Breast epithelium (tissue), 4 donors: ENCODE measurements at regions of chr1 and their contacts with region 1.

Region 1: DNA sequence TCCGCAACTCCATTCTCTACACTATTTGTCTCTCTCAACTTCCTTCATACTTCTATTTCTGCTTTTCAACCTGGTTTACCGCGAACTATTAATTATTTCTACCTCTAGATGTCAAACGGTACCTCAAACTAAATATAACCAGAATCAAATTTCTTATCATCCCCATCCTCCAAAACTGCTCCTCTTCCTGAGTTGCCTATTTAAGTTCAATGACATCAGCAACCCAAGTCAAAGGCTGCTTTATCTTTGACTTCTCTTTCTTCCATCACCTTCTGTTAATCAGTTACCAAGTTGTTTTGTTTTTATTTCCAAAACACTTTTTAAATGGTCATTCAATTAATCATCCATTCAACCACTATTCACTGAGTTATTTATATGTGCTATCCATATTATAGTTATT is 171.9 kb downstream of the COL24A1 start:
- DNase-seq: no peak
- H3K4me3 ChIP-seq: no peak overlapping the region
- H3K27ac ChIP-seq: no peak overlapping the region
- H3K4me1 ChIP-seq: no peaks in the 10 kb centered on the region
- H3K27me3 ChIP-seq: no peaks in the 10 kb centered on the region
- CTCF ChIP-seq: no peak
- POLR2A ChIP-seq: no peak

Region 2: GRCh38 chr1:86247597-86248279 is 263.1 kb after region 1 on chr1:
- intact Hi-C with region 1: no loop called
- DNase-seq: no peak
- H3K4me3 ChIP-seq: no peak overlapping the region
- H3K27ac ChIP-seq: no peak overlapping the region
- H3K4me1 ChIP-seq: no peaks in the 10 kb centered on the region
- H3K27me3 ChIP-seq: no peaks in the 10 kb centered on the region
- CTCF ChIP-seq: no peak
- POLR2A ChIP-seq: no peak

Region 3: DNA sequence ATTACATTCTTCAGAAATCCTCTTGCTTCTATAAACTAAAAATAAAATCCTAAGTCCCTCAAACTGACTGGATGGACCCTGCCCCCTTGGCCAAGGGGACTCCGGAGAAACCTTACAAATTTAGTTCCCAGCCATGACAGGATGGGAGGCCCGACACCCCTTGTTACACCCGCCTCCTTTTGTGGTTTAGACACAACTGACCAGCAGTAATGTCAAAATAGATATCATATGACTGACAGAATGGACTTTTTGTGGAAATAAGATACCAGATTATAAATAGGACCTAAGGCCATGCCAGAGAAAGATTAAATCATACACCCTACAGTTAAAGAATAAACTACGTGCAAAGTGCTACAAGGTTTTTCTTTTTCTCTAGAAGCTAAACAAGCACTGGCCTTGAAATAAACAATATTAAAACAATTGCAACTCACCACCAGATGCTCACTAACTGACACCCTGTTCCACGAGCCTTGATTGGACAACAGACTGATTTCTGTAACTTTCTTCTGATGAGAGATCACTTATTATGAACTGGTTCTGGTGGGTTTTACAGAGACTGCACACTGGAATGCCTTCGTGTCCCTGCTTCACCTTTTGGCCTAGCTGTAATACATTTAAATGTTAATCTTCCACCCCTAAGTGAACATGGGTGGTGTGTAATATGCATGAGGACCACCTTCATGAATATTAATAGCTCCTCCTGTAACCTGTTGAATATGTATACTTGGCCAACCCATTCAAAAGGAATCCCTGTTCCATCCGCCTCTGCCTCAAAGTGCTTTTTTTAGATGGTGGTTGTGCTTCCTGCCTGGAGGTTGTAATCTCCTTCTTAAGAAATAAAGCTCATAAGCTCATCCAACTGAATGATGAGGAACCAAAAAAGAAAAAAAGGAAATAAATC is 311.9 kb after region 1 on chr1:
- intact Hi-C with region 1: loop called (anchors 5 kb)
- DNase-seq: no peak
- H3K4me3 ChIP-seq: no peak overlapping the region
- H3K27ac ChIP-seq: no peak overlapping the region
- H3K4me1 ChIP-seq: no peaks in the 10 kb centered on the region
- H3K27me3 ChIP-seq: no peaks in the 10 kb centered on the region
- CTCF ChIP-seq: no peak
- POLR2A ChIP-seq: no peak